ENCODE measurements at regions of chr1 and their contacts with region 1.

Region 1: DNA sequence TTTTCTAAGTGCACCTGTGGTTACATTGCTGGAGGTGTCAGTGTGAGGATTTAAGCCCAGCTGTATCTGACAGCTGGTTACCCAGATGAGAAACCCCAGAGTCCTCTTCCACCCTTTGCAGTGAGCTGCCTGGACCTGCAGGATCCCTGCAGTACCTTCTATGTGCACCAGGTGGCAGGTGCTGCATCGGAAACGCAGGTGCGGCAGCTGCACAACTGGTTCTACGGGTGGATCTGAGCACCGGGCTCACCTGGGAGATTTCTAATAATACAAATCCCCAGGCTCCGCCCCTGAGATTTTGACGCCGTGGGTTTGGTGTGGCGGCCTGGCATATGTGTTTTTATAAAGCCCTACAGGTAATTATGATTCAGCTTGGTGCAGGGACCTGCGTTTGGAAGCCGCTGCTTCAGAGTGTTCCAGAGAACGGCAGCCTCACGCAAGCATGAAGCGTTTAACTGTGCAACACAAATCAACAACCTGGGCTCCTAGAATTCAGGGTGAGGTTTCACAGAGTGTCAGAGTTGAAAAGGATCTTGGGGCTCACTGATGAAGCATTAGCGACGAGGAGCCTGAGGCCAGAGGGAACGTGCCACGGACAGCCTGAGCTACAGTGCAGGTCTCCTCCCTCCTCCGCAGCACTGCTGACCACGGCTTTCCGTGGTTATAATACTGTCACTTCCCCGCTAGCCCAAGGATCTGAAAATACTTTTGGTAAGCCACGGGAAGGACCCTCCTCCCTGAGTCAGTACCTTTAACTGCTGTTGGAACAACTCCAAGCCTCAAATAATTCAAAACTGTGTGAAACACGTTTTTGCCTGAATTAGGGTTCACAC is 96.7 kb upstream of the TRABD2B start:
- DNase-seq: peak; percentile 30
- H3K4me3 ChIP-seq: no peak overlapping the region
- H3K27ac ChIP-seq: no peak overlapping the region
- H3K4me1 ChIP-seq: no peaks in the 10 kb centered on the region
- H3K27me3 ChIP-seq: no peaks in the 10 kb centered on the region
- CTCF ChIP-seq: peak; percentile 59 to 78
- POLR2A ChIP-seq: no peak

Region 2: DNA sequence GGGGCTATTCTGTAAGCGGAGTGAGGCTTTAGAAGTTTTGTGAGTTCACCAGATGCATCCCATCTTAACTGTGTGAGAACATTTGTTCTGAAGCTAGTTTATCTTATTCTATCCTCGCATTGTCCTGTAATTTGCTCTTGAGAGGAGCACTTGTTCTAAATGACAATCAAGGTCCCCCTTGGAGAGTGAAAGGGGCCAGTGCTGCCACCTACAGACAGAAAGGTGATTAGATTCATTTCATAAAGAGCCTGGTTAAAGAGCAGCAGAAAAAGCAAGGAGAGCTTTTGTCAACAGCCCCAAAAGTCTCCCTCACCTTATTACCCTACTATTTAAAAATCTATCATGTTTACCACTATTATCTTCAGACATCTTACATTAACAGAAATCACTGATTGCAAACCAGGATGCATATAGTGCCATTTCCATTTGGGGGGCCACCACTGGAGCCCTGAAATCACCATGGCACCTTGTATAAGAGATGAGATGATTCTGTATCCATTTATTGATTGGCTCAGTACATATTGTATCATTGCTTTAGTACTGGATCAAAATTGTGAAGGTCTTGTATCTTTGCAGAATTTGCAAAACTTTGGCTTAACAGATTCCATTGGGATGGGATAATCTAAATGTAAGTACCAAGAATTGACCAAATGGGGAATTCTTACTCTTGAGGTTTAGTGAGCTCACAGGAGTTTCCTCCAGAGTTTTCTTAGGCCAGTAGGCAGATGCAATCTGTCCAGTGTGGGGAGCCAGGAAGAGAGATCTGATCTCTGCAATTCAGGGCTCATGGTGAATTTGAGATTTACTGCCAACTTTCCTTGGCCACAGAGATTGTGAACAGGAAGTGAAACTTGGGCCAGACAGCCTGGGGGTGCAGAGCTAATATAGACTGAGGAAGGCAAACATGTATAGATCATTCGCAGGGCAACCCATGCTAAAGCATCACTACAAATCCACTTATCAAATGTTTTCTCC is 32.5 kb before region 1 on chr1:
- CTCF ChIA-PET with region 1: no interaction called
- POLR2A ChIA-PET with region 1: no interaction called
- dilution Hi-C with region 1: no loop called
- intact Hi-C with region 1: no loop called
- DNase-seq: peak; percentile 61
- H3K4me3 ChIP-seq: no peak overlapping the region
- H3K27ac ChIP-seq: no peak overlapping the region
- H3K4me1 ChIP-seq: no peaks in the 10 kb centered on the region
- H3K27me3 ChIP-seq: no peaks in the 10 kb centered on the region
- CTCF ChIP-seq: peak; percentile 48 to 56
- POLR2A ChIP-seq: no peak

Region 3: DNA sequence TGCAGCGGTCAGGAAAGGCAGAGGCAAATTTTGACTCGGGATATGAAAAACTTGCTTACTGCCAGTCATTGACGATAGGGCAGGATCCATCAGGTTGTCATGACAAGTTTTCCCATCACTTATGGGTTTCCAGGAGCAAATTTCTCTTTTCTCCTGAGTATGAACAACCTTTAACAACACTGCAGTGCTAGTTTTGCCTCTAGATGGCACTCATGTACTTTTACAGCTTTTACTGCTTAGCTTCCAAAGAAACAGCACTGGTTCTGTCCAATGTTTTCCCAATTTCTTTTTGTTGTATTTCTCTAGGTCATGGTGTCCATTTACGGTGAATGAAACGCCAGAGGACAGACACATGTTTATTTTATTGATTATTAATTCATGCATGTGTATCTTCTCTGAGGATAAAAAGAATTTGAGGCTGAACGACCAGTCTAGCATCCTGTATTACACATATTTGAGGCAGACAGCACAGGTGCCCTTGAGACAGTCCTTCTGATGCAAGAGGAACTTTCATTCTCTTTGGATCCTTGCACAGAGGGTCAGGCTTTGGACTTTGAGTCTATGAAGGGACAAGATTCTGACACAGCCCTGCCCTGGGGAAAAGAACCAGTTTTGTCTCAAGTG is 15.6 kb after region 1 on chr1:
- CTCF ChIA-PET with region 1: interaction called, 10 read pairs
- POLR2A ChIA-PET with region 1: no interaction called
- dilution Hi-C with region 1: no loop called
- intact Hi-C with region 1: no loop called
- DNase-seq: peak; percentile 55
- H3K4me3 ChIP-seq: no peak overlapping the region
- H3K27ac ChIP-seq: no peak overlapping the region
- H3K4me1 ChIP-seq: no peaks in the 10 kb centered on the region
- H3K27me3 ChIP-seq: no peaks in the 10 kb centered on the region
- CTCF ChIP-seq: peak; percentile 64 to 78
- POLR2A ChIP-seq: no peak